ENCODE measurements at regions of chr16 and their contacts with region 1.

Region 1: DNA sequence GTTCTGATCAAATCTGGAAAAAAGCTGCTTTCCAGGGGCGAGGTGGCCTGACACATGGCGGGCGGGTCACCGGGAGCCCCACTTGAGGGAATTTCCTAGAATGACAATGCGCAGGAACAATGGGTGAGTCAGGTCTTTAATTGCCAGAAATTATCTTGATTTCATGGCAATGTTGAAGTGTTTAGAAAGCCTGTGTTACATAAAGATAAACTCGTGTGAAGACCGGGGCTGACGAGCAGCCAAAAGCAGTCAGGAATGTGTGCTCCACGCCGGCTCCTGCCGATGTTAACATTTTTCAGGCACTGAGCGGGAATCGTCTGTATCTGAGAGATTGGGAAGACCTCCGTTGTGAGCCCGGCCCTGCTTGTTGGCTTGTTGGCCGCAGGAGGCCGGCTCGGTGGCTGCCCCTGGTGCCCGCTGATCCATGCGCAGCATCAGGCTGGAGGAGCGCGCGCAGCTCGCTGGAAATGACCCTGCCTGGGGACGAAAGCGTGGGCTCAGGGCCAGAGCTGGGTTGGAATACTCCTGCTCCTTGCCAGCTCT is 353.1 kb downstream of the FOXL1 start:
- DNase-seq: peak; percentile 98
- H3K4me3 ChIP-seq: no peak overlapping the region
- H3K27ac ChIP-seq: peak overlapping the region; percentile 91
- H3K4me1 ChIP-seq: peaks cover 49% of the 10 kb centered on the region
- H3K27me3 ChIP-seq: no peaks in the 10 kb centered on the region
- CTCF ChIP-seq: peak in 1 of 2 donors; percentile 32
- POLR2A ChIP-seq: peak; percentile 68

Region 2: DNA sequence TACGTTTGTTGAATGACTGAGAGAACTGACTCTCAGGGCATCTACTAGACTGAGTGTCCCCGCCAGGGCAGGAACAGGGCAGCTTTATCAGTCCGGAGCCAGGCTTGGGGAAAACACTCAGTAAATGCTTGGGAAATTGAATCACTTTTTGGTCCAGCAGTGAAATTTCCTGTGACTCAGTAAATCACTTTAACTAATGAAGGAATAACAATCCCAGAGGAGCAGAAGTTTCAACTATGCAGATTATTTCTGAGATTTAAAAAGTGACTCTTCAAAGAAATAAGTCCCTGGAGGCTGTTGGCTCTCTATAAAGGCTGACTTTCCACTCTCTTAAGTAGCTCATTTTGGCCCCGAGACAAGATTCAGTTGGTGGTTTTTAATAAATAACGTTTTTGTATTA is 251.3 kb before region 1 on chr16:
- CTCF ChIA-PET with region 1: no interaction called
- POLR2A ChIA-PET with region 1: no interaction called
- dilution Hi-C with region 1: no loop called
- intact Hi-C with region 1: loop called (anchors 1 kb)
- DNase-seq: peak; percentile 96
- H3K4me3 ChIP-seq: peak overlapping the region in 1 of 3 experiments; percentile 37
- H3K27ac ChIP-seq: peak overlapping the region; percentile 99
- H3K4me1 ChIP-seq: peaks cover 42% of the 10 kb centered on the region
- H3K27me3 ChIP-seq: no peaks in the 10 kb centered on the region
- CTCF ChIP-seq: no peak
- POLR2A ChIP-seq: peak; percentile 51

Region 3: GRCh38 chr16:86834451-86835035 is 96.9 kb before region 1 on chr16:
- CTCF ChIA-PET with region 1: no interaction called
- POLR2A ChIA-PET with region 1: no interaction called
- dilution Hi-C with region 1: no loop called
- intact Hi-C with region 1: loop called (anchors 1 kb)
- DNase-seq: peak; percentile 41
- H3K4me3 ChIP-seq: no peak overlapping the region
- H3K27ac ChIP-seq: no peak overlapping the region
- H3K4me1 ChIP-seq: peaks cover 7% of the 10 kb centered on the region
- H3K27me3 ChIP-seq: no peaks in the 10 kb centered on the region
- CTCF ChIP-seq: peak in 1 of 2 donors; percentile 29
- POLR2A ChIP-seq: no peak

Region 4: GRCh38 chr16:86914876-86915717 is 16.4 kb before region 1 on chr16:
- CTCF ChIA-PET with region 1: interaction called, 3 read pairs
- POLR2A ChIA-PET with region 1: interaction called, 4 read pairs
- dilution Hi-C with region 1: no loop called
- intact Hi-C with region 1: loop called (anchors 1 kb)
- DNase-seq: peak; percentile 88
- H3K4me3 ChIP-seq: no peak overlapping the region
- H3K27ac ChIP-seq: peak overlapping the region; percentile 56
- H3K4me1 ChIP-seq: peaks cover 19% of the 10 kb centered on the region
- H3K27me3 ChIP-seq: no peaks in the 10 kb centered on the region
- CTCF ChIP-seq: no peak
- POLR2A ChIP-seq: no peak

Region 5: GRCh38 chr16:86975445-86975844 is 44.0 kb after region 1 on chr16:
- CTCF ChIA-PET with region 1: no interaction called
- POLR2A ChIA-PET with region 1: no interaction called
- dilution Hi-C with region 1: no loop called
- intact Hi-C with region 1: loop called (anchors 2 kb)
- DNase-seq: peak; percentile 87
- H3K4me3 ChIP-seq: no peak overlapping the region
- H3K27ac ChIP-seq: no peak overlapping the region
- H3K4me1 ChIP-seq: peaks cover 2% of the 10 kb centered on the region
- H3K27me3 ChIP-seq: peaks cover 1 to 2% of the 10 kb centered on the region in 2 experiments
- CTCF ChIP-seq: no peak
- POLR2A ChIP-seq: no peak

Region 6: DNA sequence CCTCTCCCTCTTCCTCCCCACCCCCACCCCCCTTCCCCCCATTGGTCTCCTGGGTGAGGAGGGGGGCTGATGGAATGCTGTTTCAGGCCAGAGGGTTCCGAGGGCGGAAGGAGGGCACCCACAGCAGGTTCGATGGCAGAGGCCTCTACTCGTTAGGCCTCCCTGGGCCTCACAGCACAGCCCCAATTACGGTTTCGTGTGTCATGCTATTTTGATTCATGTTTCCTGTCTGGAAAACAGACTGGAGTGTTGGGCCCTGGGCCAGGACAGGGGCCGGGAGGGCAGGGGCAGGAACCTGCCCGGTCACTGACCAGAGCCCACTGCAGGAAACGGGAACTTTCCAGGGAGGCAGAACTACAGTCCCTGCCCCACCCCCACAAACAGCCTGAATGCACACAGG is 247.5 kb after region 1 on chr16:
- CTCF ChIA-PET with region 1: interaction called, 3 read pairs
- POLR2A ChIA-PET with region 1: no interaction called
- dilution Hi-C with region 1: no loop called
- intact Hi-C with region 1: loop called (anchors 10 kb)
- DNase-seq: peak; percentile 97
- H3K4me3 ChIP-seq: no peak overlapping the region
- H3K27ac ChIP-seq: peak overlapping the region; percentile 77
- H3K4me1 ChIP-seq: peaks cover 24% of the 10 kb centered on the region
- H3K27me3 ChIP-seq: no peaks in the 10 kb centered on the region
- CTCF ChIP-seq: no peak
- POLR2A ChIP-seq: peak; percentile 45

Measured in endothelial cell of umbilical vein (primary cell).